ENCODE measurements at regions of chr1 and their contacts with region 1.

Region 1: DNA sequence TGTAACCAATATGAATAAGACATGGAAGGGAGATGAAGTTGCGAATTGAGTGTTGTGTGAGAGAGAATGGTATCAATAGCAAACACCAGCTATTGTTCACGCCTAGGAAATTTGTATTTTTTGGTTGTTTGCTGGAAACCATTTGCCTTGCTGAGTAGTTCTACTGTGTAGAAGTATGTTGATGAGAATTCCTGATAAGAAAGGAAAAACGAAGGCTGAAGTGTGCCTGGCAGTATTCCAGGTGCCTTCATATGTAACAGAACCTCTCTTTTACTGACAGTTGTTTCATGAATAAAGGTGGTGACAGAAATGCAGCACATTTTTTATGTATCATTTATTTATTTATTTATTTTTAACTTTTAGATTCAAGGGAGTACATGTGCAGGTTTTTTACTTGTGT is 79.5 kb downstream of the SDCCAG8 start:
- DNase-seq: no peak
- H3K4me3 ChIP-seq: no peak overlapping the region
- H3K27me3 ChIP-seq: no peaks in the 10 kb centered on the region
- CTCF ChIP-seq: no peak

Region 2: DNA sequence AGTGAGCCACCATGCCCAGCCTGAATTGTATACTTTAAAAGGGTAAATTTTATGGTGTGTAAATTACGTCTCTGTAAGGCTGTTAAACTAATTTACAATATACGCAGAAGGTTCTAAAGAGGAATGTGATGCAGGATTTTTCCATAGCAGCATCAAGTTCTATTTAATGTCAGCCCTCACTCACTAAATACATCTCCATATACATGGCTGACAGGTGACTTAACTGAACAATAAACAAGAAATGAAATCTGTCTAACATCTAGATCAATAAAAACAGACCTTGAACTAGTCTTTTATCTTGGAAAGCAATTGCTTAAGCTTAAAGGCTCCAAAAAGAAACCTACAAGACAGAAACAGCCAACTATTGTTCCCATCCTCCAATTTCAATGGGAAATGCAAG is 1214.9 kb before region 1 on chr1:
- CTCF ChIA-PET with region 1: no interaction called
- POLR2A ChIA-PET with region 1: no interaction called
- DNase-seq: no peak
- H3K4me3 ChIP-seq: no peak overlapping the region
- H3K27me3 ChIP-seq: no peaks in the 10 kb centered on the region
- CTCF ChIP-seq: no peak

Region 3: GRCh38 chr1:243294723-243295121 is 40.6 kb before region 1 on chr1:
- CTCF ChIA-PET with region 1: no interaction called
- POLR2A ChIA-PET with region 1: no interaction called
- DNase-seq: no peak
- H3K4me3 ChIP-seq: no peak overlapping the region
- H3K27me3 ChIP-seq: no peaks in the 10 kb centered on the region
- CTCF ChIP-seq: no peak

Region 4: DNA sequence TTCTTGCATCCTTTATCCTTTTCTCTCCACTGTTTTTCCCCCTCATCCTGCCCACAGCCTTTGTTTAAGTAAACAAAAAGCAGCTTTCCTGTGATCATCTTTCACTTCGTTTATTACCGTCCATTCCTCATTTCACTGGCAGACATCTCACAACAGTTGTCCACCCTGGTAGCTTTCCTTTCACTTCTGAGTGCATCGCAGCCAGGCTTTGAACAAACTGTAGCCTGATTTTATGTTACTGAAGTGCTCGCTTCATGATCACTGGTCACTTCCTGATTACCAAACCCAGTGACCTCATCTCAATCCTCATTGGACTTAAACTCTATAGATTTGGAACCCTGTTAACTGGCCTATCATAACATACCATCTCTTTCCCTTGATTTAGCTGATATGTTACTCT is 11.8 kb before region 1 on chr1:
- CTCF ChIA-PET with region 1: no interaction called
- POLR2A ChIA-PET with region 1: no interaction called
- DNase-seq: no peak
- H3K4me3 ChIP-seq: no peak overlapping the region
- H3K27me3 ChIP-seq: no peaks in the 10 kb centered on the region
- CTCF ChIP-seq: no peak

Region 5: GRCh38 chr1:243364866-243365265 is 29.6 kb after region 1 on chr1:
- CTCF ChIA-PET with region 1: no interaction called
- POLR2A ChIA-PET with region 1: interaction called, 12 read pairs
- DNase-seq: no peak
- H3K4me3 ChIP-seq: no peak overlapping the region
- H3K27me3 ChIP-seq: no peaks in the 10 kb centered on the region
- CTCF ChIP-seq: no peak

Region 6: DNA sequence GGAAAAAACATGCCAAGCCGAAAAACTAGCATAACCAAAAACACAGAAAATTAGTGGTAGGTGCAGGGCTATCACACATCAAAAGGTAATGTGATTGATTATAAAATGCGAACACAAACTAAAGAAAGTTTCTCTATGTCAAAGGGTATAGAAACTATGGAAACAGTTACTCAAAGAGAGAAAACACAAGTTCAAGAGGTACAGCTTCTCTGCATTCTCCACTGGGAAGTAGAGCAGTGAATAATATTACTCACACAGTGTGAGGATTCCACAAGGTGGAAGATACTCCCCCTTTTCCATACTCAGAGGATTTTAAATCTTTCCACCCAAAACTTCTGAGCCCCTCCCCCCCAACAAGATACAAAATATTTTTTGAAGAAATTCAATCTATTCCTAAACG is 496.2 kb after region 1 on chr1:
- CTCF ChIA-PET with region 1: no interaction called
- POLR2A ChIA-PET with region 1: no interaction called
- DNase-seq: no peak
- H3K4me3 ChIP-seq: no peak overlapping the region
- H3K27me3 ChIP-seq: no peaks in the 10 kb centered on the region
- CTCF ChIP-seq: no peak